ENCODE measurements at regions of chr1 and their contacts with region 1.

Region 1: GRCh38 chr1:100277866-100278265 is 11.8 kb downstream of the RTCA start:
- DNase-seq: no peak
- ATAC-seq: no peak

Region 2: DNA sequence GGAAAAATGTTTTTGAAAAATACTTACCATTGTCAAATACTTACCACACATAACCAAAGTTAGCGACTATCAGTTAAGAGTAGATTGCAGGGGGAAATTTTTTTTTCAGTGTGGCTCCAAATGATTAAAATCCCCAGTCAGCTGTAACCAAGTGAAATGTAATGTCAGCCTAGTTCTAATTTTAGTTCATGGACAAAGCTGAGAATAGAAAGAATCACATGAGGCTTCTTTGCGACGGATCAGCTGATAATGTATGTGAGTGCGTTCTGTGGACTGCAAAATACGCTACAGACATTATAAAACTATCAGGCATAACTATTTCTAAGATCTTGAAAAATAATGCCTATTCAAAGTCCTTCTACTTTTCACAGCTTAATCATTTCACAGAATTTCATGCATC is 99.8 kb before region 1 on chr1 and contains the start of gene LRRC39:
- intact Hi-C with region 1: loop called (anchors 10 kb)
- DNase-seq: no peak
- ATAC-seq: peak; percentile 85
- total RNA-seq, gene LRRC39: 187 TPM

Region 3: GRCh38 chr1:100360790-100361510 is 83.1 kb after region 1 on chr1:
- intact Hi-C with region 1: no loop called
- DNase-seq: peak; percentile 61
- ATAC-seq: peak; percentile 81

Measured in Right ventricle myocardium superior (tissue), 1 donor.